ENCODE measurements at regions of chr6 and their contacts with region 1.

Region 1: GRCh38 chr6:136962661-136963060 is 40.6 kb downstream of the SLC35D3 start:
- DNase-seq: peak in 1 of 2 donors; percentile 56
- ATAC-seq: peak; percentile 82 to 95 (median 90)
- H3K4me3 ChIP-seq: no peak overlapping the region
- H3K27ac ChIP-seq: peak overlapping the region in 9 of 10 donors; percentile 24 to 81 (median 64)
- H3K4me1 ChIP-seq: peaks cover 0 to 27% (median 7%) of the 10 kb centered on the region in 9 donors
- H3K27me3 ChIP-seq: peaks cover 0 to 14% (median 0%) of the 10 kb centered on the region in 7 donors
- CTCF ChIP-seq: no peak

Region 2: DNA sequence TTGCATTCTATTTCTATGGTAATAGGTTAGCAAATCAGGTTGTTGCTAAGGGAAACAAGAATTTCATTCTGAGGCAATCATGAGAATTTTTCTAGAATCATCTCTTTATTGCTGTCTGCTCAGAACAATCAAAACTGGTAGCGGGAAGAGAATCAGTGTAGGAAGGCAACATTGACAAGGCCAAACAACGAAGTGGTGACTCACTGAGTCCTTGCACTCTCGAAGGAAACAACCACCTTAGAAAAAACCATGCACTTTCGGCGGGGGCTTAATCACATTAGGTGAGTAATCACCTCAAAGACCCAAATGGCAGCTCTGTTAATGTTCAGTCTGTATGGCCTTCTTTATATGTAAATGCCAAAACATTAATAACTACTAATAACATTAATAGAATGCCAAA is 333.7 kb before region 1 on chr6:
- intact Hi-C with region 1: no loop called
- DNase-seq: no peak
- ATAC-seq: no peak
- H3K4me3 ChIP-seq: no peak overlapping the region
- H3K27ac ChIP-seq: no peak overlapping the region
- H3K4me1 ChIP-seq: no peaks in the 10 kb centered on the region
- H3K27me3 ChIP-seq: no peaks in the 10 kb centered on the region
- CTCF ChIP-seq: no peak

Region 3: GRCh38 chr6:136840276-136841001 is 122.2 kb before region 1 on chr6:
- intact Hi-C with region 1: loop called in 1 of 10 experiments (anchors 5 kb)
- DNase-seq: no peak
- ATAC-seq: no peak
- H3K4me3 ChIP-seq: no peak overlapping the region
- H3K27ac ChIP-seq: peak overlapping the region in 1 of 10 donors; percentile 17
- H3K4me1 ChIP-seq: peaks cover 0 to 12% (median 0%) of the 10 kb centered on the region in 9 donors
- H3K27me3 ChIP-seq: no peaks in the 10 kb centered on the region
- CTCF ChIP-seq: no peak